ENCODE measurements at regions of chr12 and their contacts with region 1.

Region 1: GRCh38 chr12:46983393-46984266 is 95.8 kb upstream of the PCED1B start:
- DNase-seq: peak; percentile 71
- H3K4me3 ChIP-seq: no peak overlapping the region
- H3K27ac ChIP-seq: no peak overlapping the region
- H3K4me1 ChIP-seq: no peaks in the 10 kb centered on the region
- H3K27me3 ChIP-seq: peaks cover 0 to 8% of the 10 kb centered on the region in 2 experiments
- CTCF ChIP-seq: peak; percentile 75 to 76
- POLR2A ChIP-seq: no peak

Region 2: DNA sequence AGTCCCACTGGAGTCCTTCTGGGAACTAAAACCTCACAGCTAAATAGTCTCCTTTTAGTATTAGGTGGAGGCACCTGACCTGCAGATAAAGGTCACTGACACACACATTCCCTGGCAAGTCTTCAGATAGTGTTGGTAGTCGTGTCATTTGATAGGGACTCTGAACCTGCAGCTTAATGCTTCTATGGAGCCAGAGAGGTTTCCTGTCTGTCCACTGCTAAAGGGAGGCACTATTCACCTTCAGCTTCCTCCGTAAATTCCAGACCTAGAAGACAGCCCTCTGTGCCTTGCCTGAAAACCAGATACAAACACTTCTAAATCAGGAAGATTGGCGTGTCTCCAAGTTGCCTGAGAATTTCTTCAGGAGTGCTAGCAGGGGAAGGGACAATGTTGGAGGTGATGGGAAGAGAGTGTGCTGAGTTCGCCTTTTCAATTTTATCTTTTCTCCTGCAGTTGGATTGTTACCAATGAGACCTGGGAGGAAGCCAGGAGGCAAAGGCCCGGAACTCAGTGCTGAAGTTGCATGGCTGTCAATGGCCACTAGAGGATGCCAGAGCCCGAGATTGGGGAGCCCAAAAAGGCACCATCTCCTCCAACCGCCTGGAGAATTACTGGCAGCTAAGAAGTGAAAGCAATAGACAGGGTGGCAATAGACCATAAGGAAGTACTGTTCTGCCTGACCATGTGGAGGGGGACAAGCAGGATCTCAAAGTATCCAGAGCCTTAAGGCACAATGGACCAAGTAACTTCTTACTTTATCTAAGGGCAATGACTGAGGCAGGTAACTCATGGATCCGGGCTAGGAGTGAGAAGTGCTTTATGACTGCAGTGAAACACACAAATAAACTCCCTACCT is 911.6 kb before region 1 on chr12:
- CTCF ChIA-PET with region 1: interaction called, 12 read pairs
- POLR2A ChIA-PET with region 1: no interaction called
- dilution Hi-C with region 1: no loop called
- intact Hi-C with region 1: no loop called
- DNase-seq: peak; percentile 67
- H3K4me3 ChIP-seq: no peak overlapping the region
- H3K27ac ChIP-seq: no peak overlapping the region
- H3K4me1 ChIP-seq: no peaks in the 10 kb centered on the region
- H3K27me3 ChIP-seq: peaks cover 10 to 14% of the 10 kb centered on the region in 2 experiments
- CTCF ChIP-seq: peak; percentile 88 to 94
- POLR2A ChIP-seq: no peak

Region 3: DNA sequence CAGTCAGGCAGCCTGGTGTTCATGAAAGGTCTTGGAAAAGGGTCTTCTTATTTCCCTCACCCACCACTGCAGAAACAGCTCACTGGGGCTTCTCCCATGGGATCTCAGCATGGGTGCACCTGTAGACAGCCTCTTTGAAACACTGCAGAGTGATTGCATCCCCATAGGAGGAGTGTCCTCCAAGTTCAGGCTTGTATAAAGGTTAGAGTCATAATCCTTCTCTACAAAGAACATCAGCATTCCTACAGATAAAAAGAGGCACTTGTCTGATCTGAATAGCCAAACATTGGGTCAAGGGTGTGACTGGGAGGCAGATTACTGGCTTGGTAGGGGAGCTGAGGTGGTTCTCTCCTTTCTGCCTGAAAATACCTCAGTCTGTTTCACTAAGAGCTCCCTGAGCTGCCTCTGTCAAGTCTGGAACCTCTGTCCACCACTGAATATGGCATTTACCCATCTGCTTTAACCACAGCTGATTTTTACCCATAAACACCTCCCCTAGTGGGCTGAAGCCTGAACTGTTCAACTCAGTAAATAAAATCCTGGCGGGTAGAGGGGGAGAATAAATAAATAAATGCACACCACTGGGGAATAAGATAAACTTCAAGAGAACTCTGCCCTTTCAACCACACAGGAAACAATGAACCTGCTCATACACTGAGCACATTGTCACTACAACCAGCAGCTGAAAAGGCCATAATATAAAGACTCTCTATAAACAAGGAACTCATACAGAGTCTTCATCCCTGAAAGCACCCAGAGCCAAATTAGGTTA is 872.5 kb before region 1 on chr12:
- CTCF ChIA-PET with region 1: no interaction called
- POLR2A ChIA-PET with region 1: no interaction called
- dilution Hi-C with region 1: no loop called
- intact Hi-C with region 1: no loop called
- DNase-seq: no peak
- H3K4me3 ChIP-seq: no peak overlapping the region
- H3K27ac ChIP-seq: no peak overlapping the region
- H3K4me1 ChIP-seq: no peaks in the 10 kb centered on the region
- H3K27me3 ChIP-seq: peaks cover 0 to 4% of the 10 kb centered on the region in 2 experiments
- CTCF ChIP-seq: peak in 1 of 2 donors; percentile 7
- POLR2A ChIP-seq: no peak

Region 4: DNA sequence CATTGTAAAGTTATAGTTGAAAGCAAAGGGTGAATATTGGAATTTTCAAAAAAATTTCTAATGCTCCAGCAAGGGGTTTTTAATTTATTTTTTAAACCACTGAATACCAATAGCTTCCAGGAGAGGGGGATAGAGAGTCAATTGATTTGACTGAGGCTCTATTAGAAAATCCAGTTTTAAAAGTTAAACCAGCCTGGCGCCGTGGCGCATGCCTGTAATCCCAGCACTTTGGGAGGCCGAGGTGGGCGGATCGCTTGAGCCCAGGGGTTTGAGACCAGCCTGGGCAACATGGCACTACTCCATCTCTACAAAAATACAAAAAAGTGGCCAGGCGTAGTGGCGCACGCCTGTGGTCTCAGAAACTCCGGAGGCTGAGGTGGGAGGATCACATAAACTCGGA is 307.9 kb before region 1 on chr12:
- CTCF ChIA-PET with region 1: interaction called, 37 read pairs
- POLR2A ChIA-PET with region 1: no interaction called
- dilution Hi-C with region 1: no loop called
- intact Hi-C with region 1: loop called (anchors 2 kb)
- DNase-seq: peak; percentile 54
- H3K4me3 ChIP-seq: no peak overlapping the region
- H3K27ac ChIP-seq: no peak overlapping the region
- H3K4me1 ChIP-seq: no peaks in the 10 kb centered on the region
- H3K27me3 ChIP-seq: no peaks in the 10 kb centered on the region
- CTCF ChIP-seq: peak; percentile 36 to 44
- POLR2A ChIP-seq: no peak

Region 5: DNA sequence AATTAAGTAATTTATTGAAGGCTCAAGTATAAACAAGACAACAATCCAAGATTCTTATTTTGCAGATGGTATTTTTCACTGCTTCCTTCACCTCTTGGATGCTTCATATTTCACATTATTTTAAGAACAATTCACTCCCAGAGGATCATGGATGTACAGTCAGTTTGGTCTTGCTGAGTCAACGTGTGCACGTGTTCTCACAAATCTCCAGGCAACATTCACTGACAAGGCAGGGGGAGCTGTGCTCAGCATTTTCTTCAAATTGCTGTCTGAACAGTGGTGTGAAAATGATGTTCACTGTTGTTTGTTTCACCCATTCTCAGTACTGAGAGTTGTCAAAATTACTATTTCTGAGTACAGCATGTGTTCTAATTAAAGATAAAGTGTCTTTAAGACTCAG is 39.5 kb before region 1 on chr12:
- CTCF ChIA-PET with region 1: interaction called, 32 read pairs
- POLR2A ChIA-PET with region 1: no interaction called
- dilution Hi-C with region 1: no loop called
- intact Hi-C with region 1: no loop called
- DNase-seq: peak; percentile 37
- H3K4me3 ChIP-seq: no peak overlapping the region
- H3K27ac ChIP-seq: no peak overlapping the region
- H3K4me1 ChIP-seq: peaks cover 4% of the 10 kb centered on the region
- H3K27me3 ChIP-seq: no peaks in the 10 kb centered on the region
- CTCF ChIP-seq: peak in 1 of 2 donors; percentile 6
- POLR2A ChIP-seq: no peak

Region 6: DNA sequence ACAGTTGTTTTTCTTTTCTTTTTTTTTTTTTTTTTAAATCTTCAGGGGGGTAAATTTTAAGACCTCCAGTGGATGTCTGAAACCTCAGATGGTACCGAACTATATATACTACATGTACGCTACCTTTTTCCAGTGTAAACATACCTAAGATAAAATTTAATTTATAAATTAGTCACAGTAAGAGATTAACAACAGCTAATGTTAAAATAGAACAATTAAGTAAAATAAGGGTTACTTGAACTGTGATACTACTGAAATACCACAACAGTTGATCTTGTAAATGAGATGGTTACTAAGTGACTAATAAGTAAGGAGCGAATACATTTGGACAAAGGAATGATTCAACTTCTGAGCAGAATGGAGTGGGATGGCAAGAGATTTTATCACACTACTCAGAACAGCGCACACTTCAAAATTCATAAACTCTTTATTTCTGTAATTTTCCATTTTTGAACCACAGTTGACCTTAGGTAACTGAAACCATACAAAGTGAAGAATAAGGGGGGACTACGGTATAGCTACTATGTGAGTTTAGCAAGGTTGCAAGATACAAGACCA is 15.3 kb after region 1 on chr12:
- CTCF ChIA-PET with region 1: interaction called, 6 read pairs
- POLR2A ChIA-PET with region 1: no interaction called
- dilution Hi-C with region 1: no loop called
- intact Hi-C with region 1: loop called (anchors 2 kb)
- DNase-seq: peak; percentile 8
- H3K4me3 ChIP-seq: no peak overlapping the region
- H3K27ac ChIP-seq: no peak overlapping the region
- H3K4me1 ChIP-seq: no peaks in the 10 kb centered on the region
- H3K27me3 ChIP-seq: peaks cover 0 to 5% of the 10 kb centered on the region in 2 experiments
- CTCF ChIP-seq: no peak
- POLR2A ChIP-seq: no peak

Measured in endothelial cell of umbilical vein (primary cell).